Head of caudate nucleus (tissue), 42 donors: ENCODE measurements at regions of chr3 and their contacts with region 1.

Region 1: GRCh38 chr3:170437696-170438407 is 19.2 kb downstream of the CLDN11 start:
- DNase-seq: peak in 4 of 42 donors; percentile 26 to 74 (median 38)

Region 2: GRCh38 chr3:170419557-170420087 is 18.2 kb before region 1 on chr3:
- intact Hi-C with region 1: loop called (anchors 2 kb)
- DNase-seq: peak in 40 of 42 donors; percentile 18 to 88 (median 67)

Region 3: GRCh38 chr3:170488798-170489197 is 50.9 kb after region 1 on chr3:
- intact Hi-C with region 1: loop called (anchors 5 kb)
- DNase-seq: no peak